MCF 10A (cell line): ENCODE measurements at regions of chr5 and their contacts with region 1.

Region 1: GRCh38 chr5:24110004-24110615 is 534.7 kb downstream of the CDH10 start:
- DNase-seq: peak; percentile 63
- H3K4me3 Mint-ChIP-seq: no peak overlapping the region
- H3K27ac Mint-ChIP-seq: no peak overlapping the region
- H3K4me1 Mint-ChIP-seq: no peaks in the 10 kb centered on the region
- H3K27me3 Mint-ChIP-seq: no peaks in the 10 kb centered on the region
- CTCF ChIP-seq: peak; percentile 68

Region 2: GRCh38 chr5:24005384-24005783 is 104.7 kb before region 1 on chr5:
- CTCF ChIA-PET with region 1: interaction called, 26 read pairs
- POLR2A ChIA-PET with region 1: no interaction called
- intact Hi-C with region 1: loop called (anchors 1 kb)
- DNase-seq: peak; percentile 8
- H3K4me3 Mint-ChIP-seq: no peak overlapping the region
- H3K27ac Mint-ChIP-seq: no peak overlapping the region
- H3K4me1 Mint-ChIP-seq: no peaks in the 10 kb centered on the region
- H3K27me3 Mint-ChIP-seq: no peaks in the 10 kb centered on the region
- CTCF ChIP-seq: peak; percentile 32

Region 3: DNA sequence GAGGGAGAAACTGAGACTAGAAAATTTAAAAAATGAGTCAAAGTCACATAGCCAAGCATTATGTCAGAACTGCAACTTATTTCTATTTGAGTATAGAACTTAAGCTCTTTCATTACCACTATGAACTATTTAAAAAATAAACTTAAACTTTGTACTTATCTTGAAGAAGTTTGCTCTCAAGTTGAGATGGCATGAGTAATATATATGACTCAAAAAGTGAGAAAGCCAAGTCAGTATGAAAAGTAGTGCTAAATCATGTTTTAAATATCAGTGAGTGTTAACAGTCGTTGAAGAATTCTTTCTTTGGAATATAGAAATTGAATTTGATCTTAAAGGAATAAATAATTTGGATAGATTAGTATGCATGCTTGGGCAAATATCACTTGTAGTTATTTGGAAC is 571.0 kb after region 1 on chr5:
- CTCF ChIA-PET with region 1: no interaction called
- POLR2A ChIA-PET with region 1: no interaction called
- intact Hi-C with region 1: no loop called
- DNase-seq: no peak
- H3K4me3 Mint-ChIP-seq: no peak overlapping the region
- H3K27ac Mint-ChIP-seq: no peak overlapping the region
- H3K4me1 Mint-ChIP-seq: no peaks in the 10 kb centered on the region
- H3K27me3 Mint-ChIP-seq: no peaks in the 10 kb centered on the region
- CTCF ChIP-seq: no peak